A549 (cell line): ENCODE measurements at regions of chrX and their contacts with region 1.

Region 1: DNA sequence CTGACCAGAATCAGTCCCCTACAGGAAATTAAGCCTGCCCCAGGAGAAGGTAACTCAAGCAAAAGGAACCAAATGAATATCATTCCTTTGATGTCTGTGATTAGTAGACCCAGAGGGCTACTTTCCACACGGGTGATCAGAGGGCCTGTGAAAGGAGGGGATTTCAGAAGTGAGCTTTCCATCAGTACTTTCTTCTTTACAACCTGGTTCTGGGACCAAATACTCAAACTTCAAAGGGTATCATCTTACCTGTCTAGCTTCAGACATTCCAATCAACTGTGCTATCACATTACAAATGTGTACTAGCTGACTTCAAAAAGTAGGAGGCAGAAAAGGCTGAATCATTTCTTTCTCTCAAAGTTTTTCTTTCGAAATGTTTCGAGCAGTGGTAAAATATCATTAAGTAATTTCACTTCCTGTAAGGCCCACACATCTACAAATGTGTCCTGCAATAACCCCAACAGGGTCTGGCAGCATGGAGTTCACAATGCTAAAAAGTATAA is 23.9 kb downstream of the ACSL4 start:
- DNase-seq: peak in 1 of 2 experiments; percentile 7
- ATAC-seq: no peak
- H3K4me3 ChIP-seq: no peak overlapping the region
- H3K27ac ChIP-seq: peak overlapping the region; percentile 17 to 80; a peak in 4 of 6 replicates
- H3K4me1 ChIP-seq: peaks cover 23% of the 10 kb centered on the region
- CTCF ChIP-seq: no peak
- EP300 ChIP-seq: peak in 1 of 2 experiments; percentile 34; a peak in 1 of 5 replicates
- POLR2A ChIP-seq: no peak
- RAD21 ChIP-seq: no peak

Region 2: GRCh38 chrX:109485470-109486340 is 223.5 kb before region 1 on chrX:
- CTCF ChIA-PET with region 1: interaction called, 10 read pairs
- POLR2A ChIA-PET with region 1: no interaction called
- DNase-seq: peak; percentile 15 to 70
- ATAC-seq: peak in 1 of 2 experiments; percentile 54; a peak in 3 of 6 replicates
- H3K4me3 ChIP-seq: no peak overlapping the region
- H3K27ac ChIP-seq: no peak overlapping the region
- H3K4me1 ChIP-seq: no peaks in the 10 kb centered on the region
- CTCF ChIP-seq: peak; percentile 97
- EP300 ChIP-seq: no peak
- POLR2A ChIP-seq: no peak
- RAD21 ChIP-seq: peak; percentile 78 to 85

Region 3: GRCh38 chrX:109840585-109840984 is 131.4 kb after region 1 on chrX:
- CTCF ChIA-PET with region 1: interaction called, 12 read pairs
- POLR2A ChIA-PET with region 1: no interaction called
- DNase-seq: peak; percentile 31 to 69
- ATAC-seq: peak; percentile 91
- H3K4me3 ChIP-seq: no peak overlapping the region
- H3K27ac ChIP-seq: peak overlapping the region; percentile 71 to 90
- H3K4me1 ChIP-seq: peaks cover 36% of the 10 kb centered on the region
- CTCF ChIP-seq: no peak
- EP300 ChIP-seq: peak in 1 of 2 experiments; percentile 53; a peak in 2 of 5 replicates
- POLR2A ChIP-seq: no peak
- RAD21 ChIP-seq: peak in 1 of 2 experiments; percentile 32; a peak in 2 of 5 replicates

Region 4: GRCh38 chrX:109856974-109857373 is 147.8 kb after region 1 on chrX:
- CTCF ChIA-PET with region 1: interaction called, 147 read pairs
- POLR2A ChIA-PET with region 1: interaction called, 7 read pairs
- DNase-seq: peak; percentile 7 to 18
- ATAC-seq: no peak
- H3K4me3 ChIP-seq: no peak overlapping the region
- H3K27ac ChIP-seq: peak overlapping the region; percentile 41 to 51; a peak in 4 of 6 replicates
- H3K4me1 ChIP-seq: peaks cover 5% of the 10 kb centered on the region; the same call in 2 of the 3 replicates
- CTCF ChIP-seq: peak; percentile 83
- EP300 ChIP-seq: no peak
- POLR2A ChIP-seq: no peak
- RAD21 ChIP-seq: peak; percentile 79 to 88

Region 5: DNA sequence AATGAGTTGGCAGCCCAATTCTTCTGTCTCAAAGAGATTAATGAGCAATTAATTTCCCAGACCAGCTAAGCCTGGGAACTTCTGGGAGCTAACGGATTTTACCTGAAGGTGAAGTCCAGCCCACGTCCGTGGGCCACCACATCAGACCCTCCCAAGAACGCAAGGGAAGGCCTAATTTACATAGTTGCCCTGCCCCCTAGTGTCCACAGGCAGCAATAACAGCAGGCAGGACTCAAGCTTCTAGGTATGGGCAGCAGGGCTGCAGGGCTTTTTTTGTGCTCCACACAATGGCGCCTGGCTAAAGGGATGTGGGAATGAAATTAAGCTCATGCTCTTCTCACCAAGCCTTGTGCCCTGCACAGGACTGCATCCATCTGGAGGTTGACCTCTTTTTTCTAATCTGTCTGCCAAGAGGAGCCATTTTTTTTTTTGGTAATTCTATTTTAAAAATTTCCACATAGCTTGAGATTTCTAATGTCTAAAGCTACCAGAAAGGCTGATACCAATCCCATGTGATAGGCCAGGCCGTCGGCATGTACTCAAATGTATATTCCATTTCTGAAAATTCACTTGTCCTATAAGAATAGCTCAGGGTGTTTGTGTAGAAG is 181.8 kb after region 1 on chrX:
- CTCF ChIA-PET with region 1: interaction called, 57 read pairs
- POLR2A ChIA-PET with region 1: no interaction called
- DNase-seq: peak; percentile 47 to 72
- ATAC-seq: peak; percentile 72 to 95
- H3K4me3 ChIP-seq: no peak overlapping the region
- H3K27ac ChIP-seq: peak overlapping the region in 1 of 2 experiments; percentile 38; a peak in 1 of 6 replicates
- H3K4me1 ChIP-seq: no peaks in the 10 kb centered on the region
- CTCF ChIP-seq: peak; percentile 74
- EP300 ChIP-seq: no peak
- POLR2A ChIP-seq: no peak
- RAD21 ChIP-seq: peak; percentile 71 to 78